CD4-positive, alpha-beta memory T cell (primary cell): ENCODE measurements at regions of chr15 and their contacts with region 1.

Region 1: DNA sequence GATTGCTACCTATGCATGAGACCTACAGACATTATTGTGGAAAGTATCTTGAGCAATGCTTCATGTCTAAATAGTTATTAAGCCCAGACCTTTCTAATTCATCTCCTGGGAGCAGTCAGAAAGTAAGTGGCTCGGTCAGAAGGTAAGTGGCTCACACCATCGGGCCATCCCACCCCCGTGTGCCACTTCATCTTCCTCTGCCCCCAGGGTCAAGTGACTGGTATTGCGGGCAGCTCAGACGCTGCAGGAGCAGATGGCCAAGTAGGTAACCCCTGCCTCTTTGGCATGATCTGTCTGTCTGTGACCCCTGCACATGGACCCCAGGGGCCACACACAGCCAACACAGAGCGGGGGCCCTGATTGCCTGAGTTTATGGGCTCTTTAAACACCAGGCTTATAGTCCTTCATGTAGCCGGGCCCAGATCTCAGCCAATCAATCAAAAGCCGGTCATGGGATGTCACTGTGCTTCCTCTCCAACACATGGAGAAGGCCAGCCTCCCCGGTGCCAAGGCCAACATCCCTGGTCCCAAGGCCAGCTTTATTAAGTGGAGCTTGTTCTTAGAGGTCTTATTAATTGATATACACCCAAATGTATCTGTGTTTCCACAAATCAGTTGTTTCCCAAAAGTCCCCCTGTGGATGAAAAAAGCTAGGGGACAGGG is 42.9 kb downstream of the LARP6 start:
- DNase-seq: no peak
- H3K4me3 ChIP-seq: no peak overlapping the region
- H3K4me3 Mint-ChIP-seq: no peak overlapping the region
- H3K27ac ChIP-seq: no peak overlapping the region
- H3K27ac Mint-ChIP-seq: no peak overlapping the region
- H3K4me1 ChIP-seq: peaks cover 3% of the 10 kb centered on the region
- H3K4me1 Mint-ChIP-seq: peaks cover 0 to 9% (median 5%) of the 10 kb centered on the region in 4 donors
- H3K27me3 ChIP-seq: no peaks in the 10 kb centered on the region
- H3K27me3 Mint-ChIP-seq: peaks cover 11 to 13% of the 10 kb centered on the region in 2 donors

Region 2: DNA sequence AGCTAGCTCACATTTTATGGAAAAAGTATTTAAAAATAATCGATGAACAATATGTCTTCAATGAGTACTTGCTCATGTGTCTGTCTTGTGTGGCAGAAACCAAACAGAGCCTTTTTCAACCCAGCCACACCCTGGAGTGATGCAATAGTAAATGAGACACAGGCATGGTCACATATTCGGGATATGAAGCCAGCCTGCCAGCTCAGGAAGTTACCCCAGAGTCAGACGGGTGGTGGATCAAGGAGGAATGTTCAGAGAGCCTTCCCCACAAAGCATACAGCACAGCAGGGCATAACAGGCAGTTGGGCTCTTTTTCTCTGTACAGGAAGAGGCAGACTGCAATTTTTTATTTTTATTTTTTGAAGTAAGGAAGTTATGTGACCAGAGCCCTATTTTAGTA is 15.6 kb after region 1 on chr15:
- CTCF ChIA-PET with region 1: interaction called, 26 read pairs
- POLR2A ChIA-PET with region 1: no interaction called
- intact Hi-C with region 1: no loop called
- DNase-seq: no peak
- H3K4me3 ChIP-seq: no peak overlapping the region
- H3K4me3 Mint-ChIP-seq: no peak overlapping the region
- H3K27ac ChIP-seq: no peak overlapping the region
- H3K27ac Mint-ChIP-seq: no peak overlapping the region
- H3K4me1 ChIP-seq: no peaks in the 10 kb centered on the region
- H3K4me1 Mint-ChIP-seq: no peaks in the 10 kb centered on the region
- H3K27me3 ChIP-seq: no peaks in the 10 kb centered on the region
- H3K27me3 Mint-ChIP-seq: peaks cover 15 to 26% of the 10 kb centered on the region in 2 donors

Region 3: DNA sequence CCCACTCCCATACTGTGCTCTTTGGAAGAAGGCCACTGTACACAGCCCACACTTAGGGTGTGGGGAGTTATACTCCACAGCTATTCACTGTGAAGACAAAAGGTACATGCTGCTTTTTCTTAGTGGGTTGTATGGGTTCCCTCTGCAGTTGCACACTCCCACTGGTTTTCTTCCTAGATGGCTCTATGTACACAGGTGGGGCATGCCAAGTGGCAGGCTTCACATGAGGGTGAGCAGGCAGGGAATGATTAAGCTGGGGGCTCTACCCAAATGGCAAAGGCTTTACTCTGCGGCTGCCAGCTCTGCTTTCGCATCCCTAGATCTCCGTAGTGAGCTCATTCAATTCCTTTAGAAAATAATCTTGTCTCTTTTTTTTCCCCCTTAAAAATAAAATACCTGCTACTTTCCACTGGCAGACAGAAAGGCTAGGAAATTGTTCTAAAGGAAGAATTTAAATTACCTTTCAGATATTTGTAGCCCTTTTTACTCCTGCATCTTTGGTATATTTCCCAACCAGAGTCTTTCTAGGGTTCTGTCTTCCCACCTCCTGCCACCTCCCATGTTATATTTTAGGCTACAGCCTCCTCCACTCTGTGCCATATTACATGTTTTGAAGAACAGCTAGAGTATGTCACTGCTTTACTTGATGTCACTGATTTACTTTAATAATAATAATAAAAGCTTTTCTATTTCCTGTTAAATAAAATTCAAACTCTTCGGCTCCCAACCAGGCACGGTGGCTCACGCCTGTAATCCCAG is 34.7 kb after region 1 on chr15:
- CTCF ChIA-PET with region 1: no interaction called
- POLR2A ChIA-PET with region 1: no interaction called
- intact Hi-C with region 1: no loop called
- DNase-seq: no peak
- H3K4me3 ChIP-seq: no peak overlapping the region
- H3K4me3 Mint-ChIP-seq: no peak overlapping the region
- H3K27ac ChIP-seq: no peak overlapping the region
- H3K27ac Mint-ChIP-seq: no peak overlapping the region
- H3K4me1 ChIP-seq: no peaks in the 10 kb centered on the region
- H3K4me1 Mint-ChIP-seq: no peaks in the 10 kb centered on the region
- H3K27me3 ChIP-seq: no peaks in the 10 kb centered on the region
- H3K27me3 Mint-ChIP-seq: peaks cover 16 to 22% of the 10 kb centered on the region in 2 donors

Region 4: DNA sequence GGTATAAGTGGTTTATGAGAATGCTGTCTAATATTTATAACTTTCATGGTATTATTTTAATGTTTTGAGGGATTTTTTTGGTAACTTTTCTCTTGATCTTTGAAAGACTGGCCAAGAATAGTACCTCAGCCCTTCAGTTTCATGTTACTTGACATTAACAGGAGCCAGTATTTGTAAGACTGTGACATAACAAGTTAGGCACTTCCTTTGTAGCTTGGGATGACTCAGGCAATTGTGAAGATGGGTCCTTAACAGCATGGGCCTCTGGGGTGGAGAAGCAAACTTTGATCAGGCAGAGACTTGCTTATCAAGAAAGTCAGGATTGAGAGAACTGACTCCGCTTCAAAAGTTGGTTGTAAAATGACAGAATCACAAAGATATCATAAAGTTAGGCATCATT is 91.1 kb after region 1 on chr15:
- CTCF ChIA-PET with region 1: no interaction called
- POLR2A ChIA-PET with region 1: no interaction called
- intact Hi-C with region 1: no loop called
- DNase-seq: no peak
- H3K4me3 ChIP-seq: no peak overlapping the region
- H3K4me3 Mint-ChIP-seq: no peak overlapping the region
- H3K27ac ChIP-seq: no peak overlapping the region
- H3K27ac Mint-ChIP-seq: no peak overlapping the region
- H3K4me1 ChIP-seq: no peaks in the 10 kb centered on the region
- H3K4me1 Mint-ChIP-seq: no peaks in the 10 kb centered on the region
- H3K27me3 ChIP-seq: no peaks in the 10 kb centered on the region
- H3K27me3 Mint-ChIP-seq: peaks cover 12 to 13% of the 10 kb centered on the region in 2 donors